ENCODE measurements at regions of chr7 and their contacts with region 1.

Region 1: GRCh38 chr7:123190109-123190831 is 9.5 kb downstream of the SLC13A1 start:
- DNase-seq: peak; percentile 2
- ATAC-seq: no peak
- H3K4me3 ChIP-seq: no peak overlapping the region
- H3K27ac ChIP-seq: peak overlapping the region; percentile 80
- H3K4me1 ChIP-seq: peaks cover 17% of the 10 kb centered on the region
- H3K27me3 ChIP-seq: no peaks in the 10 kb centered on the region
- CTCF ChIP-seq: no peak

Region 2: DNA sequence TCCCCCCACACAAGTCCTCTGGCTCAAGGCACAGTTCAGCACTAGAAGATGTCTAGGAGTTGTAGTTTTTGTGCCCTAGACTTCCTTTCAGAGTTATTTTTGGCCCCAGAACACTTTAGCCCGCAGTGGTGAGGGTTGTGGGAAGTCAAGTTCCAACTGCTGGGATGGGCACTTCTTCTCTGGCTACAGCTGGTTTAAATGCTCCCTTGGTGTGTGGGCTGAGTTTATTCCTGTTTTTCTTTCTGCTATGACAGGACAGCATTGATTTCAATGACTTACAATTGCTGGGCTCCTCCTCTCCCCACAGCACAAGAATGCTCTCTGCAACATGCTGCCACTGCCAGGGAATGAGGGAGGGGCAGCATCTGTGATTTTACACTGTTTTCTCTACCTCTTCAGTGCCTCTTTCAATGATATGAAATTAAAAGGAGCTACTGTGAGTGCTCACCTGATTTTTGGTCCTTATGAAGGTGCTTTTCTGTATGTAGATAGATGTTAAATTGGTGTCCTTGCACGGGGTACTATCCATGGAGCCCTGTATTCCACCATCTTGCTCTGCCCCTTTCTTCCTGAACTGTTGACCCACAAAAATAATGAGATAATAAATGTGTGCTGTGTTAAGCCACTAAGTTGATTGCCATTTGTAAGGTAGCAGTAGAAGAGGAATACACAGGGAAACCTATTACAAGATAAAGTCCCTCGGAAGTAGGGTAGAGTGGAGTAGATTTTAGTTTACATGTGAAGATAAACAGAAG is 46.8 kb before region 1 on chr7:
- CTCF ChIA-PET with region 1: no interaction called
- POLR2A ChIA-PET with region 1: no interaction called
- intact Hi-C with region 1: no loop called
- DNase-seq: no peak
- ATAC-seq: no peak
- H3K4me3 ChIP-seq: no peak overlapping the region
- H3K27ac ChIP-seq: no peak overlapping the region
- H3K4me1 ChIP-seq: no peaks in the 10 kb centered on the region
- H3K27me3 ChIP-seq: no peaks in the 10 kb centered on the region
- CTCF ChIP-seq: no peak

Region 3: DNA sequence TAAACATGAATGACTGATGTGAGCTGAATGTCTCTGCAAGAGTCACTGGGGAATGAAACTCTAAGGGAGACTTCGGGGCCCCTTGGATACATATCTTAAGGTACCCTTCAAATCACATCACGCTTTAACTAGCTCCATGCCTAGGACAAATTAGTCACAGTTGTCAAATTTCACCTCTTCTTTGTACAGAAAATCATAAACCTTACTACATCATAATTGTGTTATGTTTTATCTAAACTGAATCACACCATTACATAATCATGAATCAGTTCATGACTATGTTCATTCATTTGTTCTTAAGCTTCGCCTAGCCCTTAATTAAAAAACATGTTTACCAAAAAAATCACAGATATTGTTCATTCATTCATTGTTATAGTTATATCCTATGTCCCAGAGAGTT is 11.6 kb after region 1 on chr7:
- CTCF ChIA-PET with region 1: no interaction called
- POLR2A ChIA-PET with region 1: no interaction called
- intact Hi-C with region 1: loop called (anchors 1 kb)
- DNase-seq: no peak
- ATAC-seq: no peak
- H3K4me3 ChIP-seq: no peak overlapping the region
- H3K27ac ChIP-seq: no peak overlapping the region
- H3K4me1 ChIP-seq: no peaks in the 10 kb centered on the region
- H3K27me3 ChIP-seq: no peaks in the 10 kb centered on the region
- CTCF ChIP-seq: no peak